ENCODE measurements at regions of chr2 and their contacts with region 1.

Region 1: GRCh38 chr2:1742681-1743395 is 1.5 kb downstream of the PXDN start:
- DNase-seq: peak; percentile 96
- H3K4me3 ChIP-seq: peak overlapping the region; percentile 62 to 87 (median 76)
- H3K27ac ChIP-seq: peak overlapping the region; percentile 96 to 100 (median 99)
- H3K4me1 ChIP-seq: peaks cover 0 to 66% (median 52%) of the 10 kb centered on the region in 4 donors
- H3K27me3 ChIP-seq: no peaks in the 10 kb centered on the region
- CTCF ChIP-seq: peak in 2 of 4 experiments; percentile 19 to 48
- EP300 ChIP-seq: no peak
- POLR2A ChIP-seq: peak in 1 of 2 donors; percentile 40

Region 2: GRCh38 chr2:677056-677965 is 1065.5 kb before region 1 on chr2 and contains the start of gene TMEM18:
- intact Hi-C with region 1: loop called (anchors 2 kb)
- DNase-seq: peak; percentile 98
- H3K4me3 ChIP-seq: peak within 1 kb of the TSS; percentile 87 to 94 (median 88)
- H3K27ac ChIP-seq: peak within 1 kb of the TSS; percentile 98 to 100 (median 98)
- H3K4me1 ChIP-seq: peaks cover 0 to 24% (median 13%) of the 10 kb centered on the region in 4 donors
- H3K27me3 ChIP-seq: no peaks in the 10 kb centered on the region
- CTCF ChIP-seq: peak in 2 of 4 experiments; percentile 13 to 30
- EP300 ChIP-seq: no peak
- POLR2A ChIP-seq: peak; percentile 75 to 84
- total RNA-seq, gene TMEM18: 14.4 to 26.8 (median 21.9) TPM

Region 3: DNA sequence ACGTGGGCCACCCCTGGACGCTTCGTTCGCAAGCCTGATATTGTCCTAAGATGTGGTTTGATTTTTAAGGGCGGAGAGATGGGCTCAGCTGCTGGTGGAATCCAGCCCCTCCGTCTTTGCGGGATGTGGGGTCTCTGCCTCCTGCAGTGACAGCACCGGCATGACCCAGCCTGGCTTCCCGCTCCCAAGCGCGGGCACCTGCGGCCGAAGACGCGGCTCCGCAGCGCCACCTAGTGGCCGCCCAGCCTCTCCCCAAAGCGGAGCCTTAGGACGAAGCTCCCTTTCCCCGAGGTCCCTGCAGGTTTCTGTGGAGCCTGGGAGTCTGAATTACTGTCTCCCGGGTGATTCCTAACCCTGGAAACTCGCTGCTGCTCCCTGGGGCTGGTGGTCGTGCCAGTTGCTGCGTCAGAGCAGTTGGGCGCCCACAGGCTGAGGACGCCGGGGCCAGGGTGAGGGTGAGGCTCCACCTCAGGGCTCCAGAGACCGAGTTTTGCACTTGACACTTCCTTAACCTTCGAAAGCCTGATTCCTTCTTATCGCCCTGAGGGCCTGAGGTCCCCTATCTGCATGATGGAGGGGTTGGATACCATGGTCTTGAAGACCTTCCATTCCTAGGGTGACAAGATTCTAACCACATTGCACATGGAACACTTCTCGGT is 192.1 kb before region 1 on chr2:
- intact Hi-C with region 1: loop called (anchors 5 kb)
- DNase-seq: peak; percentile 75
- H3K4me3 ChIP-seq: no peak overlapping the region
- H3K27ac ChIP-seq: no peak overlapping the region
- H3K4me1 ChIP-seq: peaks cover 0 to 13% (median 9%) of the 10 kb centered on the region in 4 donors
- H3K27me3 ChIP-seq: no peaks in the 10 kb centered on the region
- CTCF ChIP-seq: peak; percentile 44 to 98 (median 72)
- EP300 ChIP-seq: no peak
- POLR2A ChIP-seq: no peak

Region 4: DNA sequence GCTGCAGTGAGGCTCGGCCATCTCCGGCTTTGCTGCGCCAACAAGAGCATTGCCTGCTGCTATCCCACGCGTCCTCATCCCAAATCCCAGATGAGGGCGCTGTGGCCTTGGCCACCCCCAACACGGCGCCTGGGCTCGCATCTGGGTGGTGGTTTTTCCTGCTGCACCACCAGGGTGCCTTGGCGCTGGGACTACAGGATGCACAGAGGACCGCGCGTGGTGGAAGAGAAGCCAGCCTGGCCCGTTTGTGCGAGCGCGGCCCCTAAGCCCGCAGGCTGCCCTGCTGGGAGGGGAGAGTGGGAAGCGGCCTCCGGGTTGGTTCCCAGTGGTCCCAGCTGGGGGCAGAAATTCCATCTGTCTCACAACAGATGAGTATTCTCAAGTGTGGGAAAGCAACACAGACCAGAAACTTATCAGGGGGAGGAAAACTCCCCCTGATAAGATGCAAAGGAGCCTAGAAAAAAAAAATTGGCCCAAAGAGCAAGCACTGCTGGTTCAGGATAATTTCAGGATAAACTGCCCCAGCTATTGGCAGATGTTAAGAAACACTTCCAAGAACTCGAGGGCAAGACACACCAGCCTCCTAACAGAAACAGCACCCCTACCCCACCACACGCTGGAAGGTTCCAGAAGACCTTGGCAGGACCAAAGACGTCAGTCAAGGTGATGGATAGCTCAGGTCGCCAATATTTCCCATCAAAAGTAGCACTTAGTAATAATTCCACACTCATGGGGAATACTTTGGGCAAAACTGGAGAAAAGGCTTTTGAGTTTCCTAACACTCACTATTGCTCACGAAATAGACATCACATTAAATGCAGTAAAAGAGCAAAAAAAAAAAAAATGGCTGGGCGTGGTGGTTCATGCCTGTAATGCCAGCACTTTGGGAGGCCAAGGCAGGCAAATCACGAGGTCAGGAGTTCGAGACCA is 150.6 kb before region 1 on chr2:
- intact Hi-C with region 1: loop called (anchors 2 kb)
- DNase-seq: peak; percentile 92
- H3K4me3 ChIP-seq: peak overlapping the region in 1 of 4 donors; percentile 2
- H3K27ac ChIP-seq: peak overlapping the region in 3 of 4 donors; percentile 30 to 70 (median 57)
- H3K4me1 ChIP-seq: peaks cover 0 to 36% (median 25%) of the 10 kb centered on the region in 4 donors
- H3K27me3 ChIP-seq: no peaks in the 10 kb centered on the region
- CTCF ChIP-seq: peak; percentile 68 to 87 (median 84)
- EP300 ChIP-seq: no peak
- POLR2A ChIP-seq: no peak

Region 5: DNA sequence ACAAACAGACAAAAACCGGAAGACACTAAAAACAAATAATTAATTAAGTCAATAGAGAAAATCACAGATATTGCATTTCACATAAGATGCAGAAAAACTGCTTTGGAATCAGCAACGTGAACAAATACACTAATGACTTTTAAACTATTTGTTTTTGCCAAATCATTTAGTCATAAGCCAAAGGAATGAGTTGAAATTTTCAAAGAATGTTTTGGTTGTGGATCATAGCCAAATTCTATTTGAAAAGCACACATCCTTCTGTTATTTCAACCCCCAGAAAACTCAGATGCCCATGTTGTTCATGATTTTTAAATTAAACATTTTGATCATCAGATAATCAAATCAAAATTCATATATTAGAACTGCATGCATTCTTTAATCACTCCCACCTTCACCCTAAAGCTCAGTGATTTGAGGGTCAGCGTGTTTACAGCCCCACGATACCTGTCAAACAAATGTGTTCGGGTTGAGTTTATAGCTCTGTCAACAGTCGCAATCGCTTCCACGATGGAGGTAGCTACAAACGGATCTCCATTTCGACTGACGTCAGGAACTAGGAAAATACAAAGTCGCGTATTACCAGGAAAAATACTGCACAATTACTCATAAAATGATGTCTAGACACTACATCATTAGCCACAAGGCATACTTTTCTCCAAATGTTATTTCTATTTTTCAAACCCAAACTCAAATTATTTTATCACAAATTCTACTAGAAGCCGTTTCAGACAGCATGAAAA is 88.7 kb before region 1 on chr2:
- intact Hi-C with region 1: loop called (anchors 2 kb)
- DNase-seq: no peak
- H3K4me3 ChIP-seq: no peak overlapping the region
- H3K27ac ChIP-seq: peak overlapping the region; percentile 80 to 90 (median 86)
- H3K4me1 ChIP-seq: peaks cover 0 to 60% (median 50%) of the 10 kb centered on the region in 4 donors
- H3K27me3 ChIP-seq: no peaks in the 10 kb centered on the region
- CTCF ChIP-seq: no peak
- EP300 ChIP-seq: no peak
- POLR2A ChIP-seq: no peak

Region 6: DNA sequence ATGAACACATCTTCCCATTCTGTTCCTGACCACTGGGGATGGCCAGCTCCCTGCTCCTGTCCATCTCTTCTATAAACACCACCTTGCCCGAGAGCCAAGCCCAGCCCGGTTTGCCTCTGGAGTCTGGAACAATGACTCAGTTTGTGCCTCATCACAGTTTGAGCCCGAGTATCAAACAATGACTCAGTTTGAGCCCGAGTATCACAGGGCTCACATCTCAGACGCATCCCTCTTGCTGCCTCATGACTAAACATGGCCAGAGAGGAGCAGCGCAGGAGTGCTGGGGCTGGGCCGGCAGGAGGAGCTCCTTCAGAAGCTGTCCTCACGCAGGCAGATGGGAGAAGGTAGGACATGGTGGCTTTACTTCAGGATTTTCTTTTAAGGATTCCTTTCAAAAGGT is 67.2 kb before region 1 on chr2:
- intact Hi-C with region 1: loop called (anchors 1 kb)
- DNase-seq: peak; percentile 95
- H3K4me3 ChIP-seq: no peak overlapping the region
- H3K27ac ChIP-seq: peak overlapping the region; percentile 80 to 95 (median 86)
- H3K4me1 ChIP-seq: peaks cover 0 to 40% (median 27%) of the 10 kb centered on the region in 4 donors
- H3K27me3 ChIP-seq: no peaks in the 10 kb centered on the region
- CTCF ChIP-seq: peak; percentile 37 to 62 (median 45)
- EP300 ChIP-seq: peak in 2 of 4 donors; percentile 22 to 88
- POLR2A ChIP-seq: no peak

Region 7: DNA sequence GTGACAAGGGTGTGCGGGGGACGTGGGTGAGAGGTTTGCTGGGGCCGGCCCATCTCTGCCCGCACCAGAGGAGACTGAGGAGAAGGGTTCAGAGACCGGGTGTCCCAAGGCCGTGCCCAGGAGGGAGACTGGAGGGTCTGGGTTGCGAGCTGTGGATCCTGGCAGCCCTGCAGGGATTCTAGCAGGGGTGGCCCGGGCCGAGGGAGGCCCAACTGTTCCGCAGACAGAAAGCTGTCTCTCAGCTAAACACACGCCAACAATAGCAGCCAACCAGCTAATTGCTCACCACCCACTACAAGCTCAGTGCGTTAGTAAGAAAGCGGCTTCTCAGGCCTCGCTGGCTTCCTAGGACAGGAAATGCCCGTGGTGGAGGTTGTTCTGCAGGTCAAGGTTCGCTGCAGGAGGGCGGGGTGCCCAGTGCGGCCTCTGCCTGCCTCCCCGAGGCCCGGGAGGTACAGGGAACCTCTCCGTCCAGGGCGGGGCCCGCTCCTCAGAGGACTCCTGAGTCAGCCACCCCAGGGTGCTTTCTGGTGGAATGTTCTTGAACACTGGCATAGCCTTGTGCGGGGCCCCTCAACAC is 283.5 kb after region 1 on chr2:
- intact Hi-C with region 1: no loop called
- DNase-seq: no peak
- H3K4me3 ChIP-seq: no peak overlapping the region
- H3K27ac ChIP-seq: no peak overlapping the region
- H3K4me1 ChIP-seq: peaks cover 0 to 6% (median 0%) of the 10 kb centered on the region in 4 donors
- H3K27me3 ChIP-seq: no peaks in the 10 kb centered on the region
- CTCF ChIP-seq: no peak
- EP300 ChIP-seq: no peak
- POLR2A ChIP-seq: no peak

Measured in sigmoid colon (tissue), 7 donors.